ENCODE measurements at regions of chr7 and their contacts with region 1.

Region 1: DNA sequence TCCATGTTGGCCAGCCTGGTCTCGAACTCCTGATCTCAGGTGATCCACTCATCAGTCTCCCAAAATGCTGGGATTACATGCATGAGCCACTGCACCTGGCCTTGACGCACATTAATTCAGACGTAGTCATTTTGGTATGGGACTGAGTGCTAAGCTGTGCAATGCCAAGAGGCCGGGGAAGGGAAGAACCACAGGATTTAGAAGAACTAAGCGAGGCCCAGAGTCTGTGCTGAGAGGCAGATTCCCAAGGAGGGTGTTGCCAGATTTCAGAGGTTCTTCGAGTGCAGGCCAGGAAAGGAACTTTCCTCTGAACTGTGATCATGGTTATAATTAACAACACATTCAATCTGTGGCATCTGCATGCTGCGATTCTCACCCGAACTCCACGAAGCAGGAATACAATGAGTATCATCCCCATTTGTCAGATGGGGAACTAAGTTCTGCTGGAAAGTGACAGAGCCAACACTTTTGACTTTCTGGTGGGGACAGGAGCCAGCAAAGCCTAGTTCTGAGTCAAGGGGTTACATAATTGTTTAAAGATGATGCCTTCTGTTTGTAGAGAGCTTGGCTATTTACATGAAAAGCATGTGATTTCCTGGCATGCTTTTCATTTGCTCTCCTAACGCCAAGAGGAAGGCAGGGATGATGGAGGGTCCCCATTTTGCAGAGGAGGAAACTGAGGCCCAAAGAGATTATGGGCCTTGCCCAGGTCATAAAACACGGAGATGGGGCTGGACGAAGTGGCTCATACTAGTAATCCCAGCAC is 6.2 kb upstream of the ZAN start:
- DNase-seq: no peak
- ATAC-seq: no peak
- H3K4me3 ChIP-seq: no peak overlapping the region
- H3K27ac ChIP-seq: no peak overlapping the region
- H3K4me1 ChIP-seq: no peaks in the 10 kb centered on the region
- H3K27me3 ChIP-seq: peaks cover 0 to 8% of the 10 kb centered on the region in 2 experiments; a peak in 3 of 4 replicates
- CTCF ChIP-seq: no peak
- EP300 ChIP-seq: no peak
- POLR2A ChIP-seq: no peak
- RAD21 ChIP-seq: no peak

Region 2: DNA sequence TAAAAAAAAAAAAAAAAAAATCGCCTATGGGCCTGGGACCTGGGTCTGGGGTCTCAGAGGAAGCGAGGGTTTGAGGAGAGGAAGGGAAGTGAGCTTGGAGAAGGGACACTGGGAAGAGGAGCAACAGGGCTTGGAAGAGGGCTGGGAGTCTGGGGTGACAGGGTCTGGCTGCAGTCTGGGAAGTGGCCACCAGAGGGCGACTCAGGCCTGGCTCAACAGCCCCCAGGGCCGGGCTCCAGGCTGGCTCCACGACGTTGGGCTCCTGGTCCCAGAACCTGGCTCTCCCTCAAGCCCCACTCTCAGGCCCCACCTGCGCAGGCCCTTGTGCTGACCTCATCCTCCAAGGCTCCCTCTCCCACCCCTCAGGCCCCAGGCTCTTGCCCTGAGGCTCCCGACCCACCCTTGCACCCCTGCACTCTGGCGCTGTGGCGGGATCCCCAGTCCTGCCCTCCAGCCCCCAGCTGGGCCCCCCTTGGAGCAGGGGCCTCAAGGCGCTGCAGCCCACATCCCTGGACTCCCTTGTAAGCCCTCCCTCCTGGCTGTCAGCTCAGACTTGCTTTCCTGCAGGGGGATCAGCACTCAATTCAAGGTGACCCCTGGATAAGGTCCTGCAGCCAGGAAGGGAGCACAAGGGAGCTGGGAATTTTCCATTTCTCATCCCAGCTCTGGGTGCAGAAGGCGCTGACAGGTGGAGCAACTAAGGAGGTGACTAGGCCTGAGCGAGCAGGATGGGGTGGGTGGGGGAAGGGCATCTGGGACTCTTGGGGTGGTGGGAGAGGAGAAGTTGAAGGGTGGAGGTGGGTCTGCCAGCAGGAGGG is 257.7 kb before region 1 on chr7:
- CTCF ChIA-PET with region 1: no interaction called
- POLR2A ChIA-PET with region 1: no interaction called
- RAD21 ChIA-PET with region 1: no interaction called
- SMC1A ChIA-PET with region 1: no interaction called
- in situ Hi-C with region 1: loop called (anchors 5 kb)
- intact Hi-C with region 1: no loop called
- DNase-seq: no peak
- ATAC-seq: peak; percentile 94
- H3K4me3 ChIP-seq: no peak overlapping the region
- H3K27ac ChIP-seq: no peak overlapping the region
- H3K4me1 ChIP-seq: peaks cover 12% of the 10 kb centered on the region
- H3K27me3 ChIP-seq: no peaks in the 10 kb centered on the region
- CTCF ChIP-seq: peak; percentile 95 to 96 (median 96)
- EP300 ChIP-seq: no peak
- POLR2A ChIP-seq: peak; percentile 63; the same call in 1 of the 2 replicates
- RAD21 ChIP-seq: peak; percentile 85

Region 3: DNA sequence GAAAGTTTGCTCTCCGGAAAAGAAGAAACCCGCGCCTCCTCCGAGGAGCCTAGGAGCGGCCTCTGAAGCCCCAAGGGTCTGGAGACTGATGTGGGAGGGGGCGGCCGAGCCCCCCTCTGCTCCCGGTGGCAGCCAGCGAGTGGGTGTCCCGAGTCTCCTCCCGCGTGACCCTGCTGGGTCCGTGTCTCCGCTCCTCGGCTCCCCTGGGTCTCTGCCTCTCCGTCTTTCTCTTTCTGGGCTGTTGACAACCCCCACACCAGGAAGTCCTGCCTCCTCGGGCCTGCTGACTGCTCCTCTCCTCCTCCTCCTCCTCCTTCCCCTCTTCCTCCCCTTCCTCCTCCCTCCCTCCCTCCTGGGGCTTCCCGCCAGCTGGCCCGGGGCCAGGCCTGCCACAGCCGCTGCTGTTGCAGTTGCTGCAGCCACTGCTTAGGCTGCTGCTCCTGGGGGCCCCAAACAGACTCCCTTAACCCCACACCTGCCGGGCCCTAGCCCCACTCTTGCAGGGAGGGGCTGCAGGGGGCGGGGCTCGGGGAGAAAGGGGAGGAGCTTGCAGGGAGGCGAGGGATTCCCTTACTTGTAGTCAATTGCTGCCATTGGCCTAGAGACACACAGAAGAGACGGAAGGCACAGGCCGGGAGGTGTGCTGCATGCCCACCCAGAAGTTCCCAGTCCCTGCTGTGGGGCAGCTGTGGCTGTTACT is 248.1 kb before region 1 on chr7 and contains the start of gene TSC22D4:
- CTCF ChIA-PET with region 1: interaction called, 3 read pairs
- POLR2A ChIA-PET with region 1: no interaction called
- RAD21 ChIA-PET with region 1: no interaction called
- SMC1A ChIA-PET with region 1: no interaction called
- in situ Hi-C with region 1: loop called (anchors 5 kb)
- intact Hi-C with region 1: loop called (anchors 5 kb)
- DNase-seq: peak; percentile 79
- ATAC-seq: peak; percentile 85
- H3K4me3 ChIP-seq: peak within 1 kb of the TSS; percentile 99
- H3K27ac ChIP-seq: peak within 1 kb of the TSS; percentile 89
- H3K4me1 ChIP-seq: peaks cover 27% of the 10 kb centered on the region
- H3K27me3 ChIP-seq: no peaks in the 10 kb centered on the region
- CTCF ChIP-seq: no peak
- EP300 ChIP-seq: no peak
- POLR2A ChIP-seq: peak; percentile 87
- RAD21 ChIP-seq: no peak
- polyA plus RNA-seq, gene TSC22D4: 0.50 to 1.2 TPM

Region 4: GRCh38 chr7:100563809-100564400 is 163.3 kb before region 1 on chr7:
- CTCF ChIA-PET with region 1: interaction called, 12 read pairs
- POLR2A ChIA-PET with region 1: no interaction called
- RAD21 ChIA-PET with region 1: no interaction called
- SMC1A ChIA-PET with region 1: interaction called, 4 read pairs
- in situ Hi-C with region 1: no loop called
- intact Hi-C with region 1: loop called (anchors 1 kb)
- DNase-seq: no peak
- ATAC-seq: peak; percentile 84
- H3K4me3 ChIP-seq: no peak overlapping the region
- H3K27ac ChIP-seq: no peak overlapping the region
- H3K4me1 ChIP-seq: peaks cover 8% of the 10 kb centered on the region
- H3K27me3 ChIP-seq: no peaks in the 10 kb centered on the region
- CTCF ChIP-seq: peak; percentile 94 to 98 (median 97)
- EP300 ChIP-seq: no peak
- POLR2A ChIP-seq: peak; percentile 35
- RAD21 ChIP-seq: peak; percentile 71